ENCODE measurements at regions of chr14 and their contacts with region 1.

Region 1: DNA sequence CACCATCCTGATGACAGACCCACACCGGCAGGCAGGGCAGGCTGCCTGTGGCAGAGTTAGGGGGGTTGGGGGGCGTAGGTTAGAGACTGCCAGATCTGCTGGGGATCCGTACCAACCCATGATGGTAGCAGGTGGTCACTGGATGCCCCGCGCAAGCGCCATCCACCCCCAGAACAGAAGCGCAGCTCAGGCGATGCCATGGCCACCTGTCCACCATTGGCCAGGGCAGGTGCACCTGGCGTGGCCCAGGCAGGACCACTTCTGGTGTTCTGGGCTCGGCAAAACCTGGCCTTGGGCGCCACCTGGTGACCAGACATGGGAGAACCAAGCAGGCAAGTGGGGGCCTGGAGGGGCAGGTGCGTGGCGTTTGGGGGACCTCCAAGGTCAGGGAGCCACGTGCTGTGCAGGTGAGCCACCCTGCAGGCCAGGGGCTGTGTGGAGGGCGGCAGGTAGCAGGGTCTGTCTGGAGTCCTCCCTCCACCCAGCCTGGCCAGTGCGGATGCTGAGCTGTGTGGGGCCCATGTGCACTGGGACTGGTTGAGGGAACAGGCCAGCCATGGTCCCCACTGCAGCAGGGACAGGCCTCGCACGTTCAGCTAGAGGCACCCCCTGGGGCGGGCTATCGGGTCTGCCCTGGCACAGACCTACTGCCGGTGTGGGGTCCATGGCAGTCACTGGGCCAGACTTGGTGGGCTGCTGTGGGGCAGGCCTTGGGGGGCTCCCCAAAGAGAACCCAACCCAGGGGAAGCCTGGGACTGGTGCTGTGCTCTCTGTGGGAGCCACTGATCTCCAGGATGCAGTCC is 15.6 kb downstream of the BAG5 start:
- DNase-seq: no peak
- H3K4me3 ChIP-seq: no peak overlapping the region
- H3K27ac ChIP-seq: no peak overlapping the region
- H3K27me3 ChIP-seq: no peaks in the 10 kb centered on the region
- CTCF ChIP-seq: peak; percentile 85

Region 2: DNA sequence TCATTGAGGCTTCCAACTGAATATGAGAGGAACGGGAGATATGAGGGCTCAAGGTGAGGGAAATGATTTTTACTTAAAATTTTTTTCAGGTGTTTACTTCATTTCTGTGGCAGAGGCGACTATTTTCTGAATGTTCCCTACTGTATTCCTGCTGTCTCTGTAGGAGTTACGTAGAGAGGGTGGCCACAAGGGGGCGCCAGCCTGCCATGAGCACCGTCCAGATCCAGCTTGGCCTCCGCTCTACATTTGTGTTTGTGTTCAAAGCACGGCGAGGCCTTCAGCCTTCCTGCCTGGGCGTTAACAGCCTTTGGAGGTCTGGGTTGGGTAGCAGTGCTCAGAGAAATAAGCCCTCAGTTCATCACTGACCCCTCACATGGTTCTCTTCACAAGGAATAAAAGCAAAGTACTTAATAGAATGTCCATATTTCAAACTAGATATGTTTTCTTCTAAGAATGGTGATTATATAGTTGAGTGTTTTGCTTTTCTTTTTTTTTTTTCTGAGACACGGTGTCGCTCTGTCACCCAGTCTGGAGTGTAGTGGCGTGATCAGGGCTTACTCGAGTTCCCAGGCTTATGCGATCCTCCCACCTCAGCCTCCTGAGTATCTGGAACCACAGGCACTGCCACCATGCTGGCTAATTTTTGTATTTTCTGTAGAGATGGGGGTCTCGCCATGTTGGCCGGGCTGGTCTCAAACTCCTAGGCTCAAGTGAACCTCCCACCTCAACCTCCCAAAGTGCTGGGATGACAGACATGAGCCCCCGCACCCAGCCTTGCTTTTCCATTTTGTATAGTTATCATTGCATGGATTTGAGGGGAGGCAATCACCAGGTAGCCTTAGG is 46.5 kb before region 1 on chr14:
- CTCF ChIA-PET with region 1: interaction called, 15 read pairs
- POLR2A ChIA-PET with region 1: no interaction called
- DNase-seq: peak; percentile 66
- H3K4me3 ChIP-seq: no peak overlapping the region
- H3K27ac ChIP-seq: no peak overlapping the region
- H3K27me3 ChIP-seq: no peaks in the 10 kb centered on the region
- CTCF ChIP-seq: peak; percentile 98

Region 3: GRCh38 chr14:103558071-103558882 is 11.4 kb after region 1 on chr14:
- CTCF ChIA-PET with region 1: interaction called, 22 read pairs
- POLR2A ChIA-PET with region 1: no interaction called
- DNase-seq: no peak
- H3K4me3 ChIP-seq: no peak overlapping the region
- H3K27ac ChIP-seq: peak overlapping the region; percentile 42
- H3K27me3 ChIP-seq: no peaks in the 10 kb centered on the region
- CTCF ChIP-seq: no peak

Region 4: GRCh38 chr14:103641181-103641580 is 94.3 kb after region 1 on chr14:
- CTCF ChIA-PET with region 1: no interaction called
- POLR2A ChIA-PET with region 1: no interaction called
- DNase-seq: no peak
- H3K4me3 ChIP-seq: no peak overlapping the region
- H3K27ac ChIP-seq: peak overlapping the region; percentile 31
- H3K27me3 ChIP-seq: no peaks in the 10 kb centered on the region
- CTCF ChIP-seq: no peak

Measured in AG04450 (cell line).